ENCODE measurements at regions of chr2 and their contacts with region 1.

Region 1: GRCh38 chr2:162343824-162344616 is at the start of gene GCA:
- DNase-seq: peak; percentile 92 to 98
- H3K4me3 ChIP-seq: peak within 1 kb of the TSS; percentile 64 to 93
- H3K27ac ChIP-seq: peak within 1 kb of the TSS; percentile 43 to 67
- H3K4me1 ChIP-seq: no peaks in the 10 kb centered on the region
- H3K27me3 ChIP-seq: no peaks in the 10 kb centered on the region
- CTCF ChIP-seq: no peak
- total RNA-seq, gene GCA: 45.1 TPM

Region 2: GRCh38 chr2:162318328-162319180 is 25.5 kb before region 1 on chr2 and contains the start of gene IFIH1:
- intact Hi-C with region 1: loop called (anchors 2 kb)
- DNase-seq: peak; percentile 47 to 87
- H3K4me3 ChIP-seq: peak within 1 kb of the TSS; percentile 97 to 98
- H3K27ac ChIP-seq: peak within 1 kb of the TSS; percentile 80 to 83
- H3K4me1 ChIP-seq: peaks cover 5 to 25% of the 10 kb centered on the region in 2 donors
- H3K27me3 ChIP-seq: no peaks in the 10 kb centered on the region
- CTCF ChIP-seq: peak in 2 of 3 experiments; percentile 29 to 41
- total RNA-seq, gene IFIH1: 11.8 TPM